Psoas muscle (tissue), 8 donors: ENCODE measurements at regions of chr12 and their contacts with region 1.

Region 1: GRCh38 chr12:43805860-43806736 is at the start of gene TWF1:
- DNase-seq: peak; percentile 91 to 93
- ATAC-seq: peak; percentile 99 to 100 (median 100)
- H3K4me3 ChIP-seq: peak within 1 kb of the TSS; percentile 96
- H3K27ac ChIP-seq: peak within 1 kb of the TSS; percentile 97
- H3K4me1 ChIP-seq: peaks cover 17% of the 10 kb centered on the region
- H3K27me3 ChIP-seq: no peaks in the 10 kb centered on the region
- CTCF ChIP-seq: no peak
- total RNA-seq, gene TWF1: 6.2 to 12.7 (median 9.2) TPM

Region 2: GRCh38 chr12:43766291-43766690 is 39.8 kb before region 1 on chr12:
- intact Hi-C with region 1: loop called in 1 of 2 experiments (anchors 5 kb)
- DNase-seq: no peak
- ATAC-seq: no peak
- H3K4me3 ChIP-seq: no peak overlapping the region
- H3K27ac ChIP-seq: no peak overlapping the region
- H3K4me1 ChIP-seq: no peaks in the 10 kb centered on the region
- H3K27me3 ChIP-seq: no peaks in the 10 kb centered on the region
- CTCF ChIP-seq: no peak

Region 3: GRCh38 chr12:43835656-43836474 is 29.8 kb after region 1 on chr12 and contains the start of gene TMEM117:
- intact Hi-C with region 1: loop called in 1 of 2 experiments (anchors 2 kb)
- DNase-seq: peak; percentile 81 to 89
- ATAC-seq: peak; percentile 95 to 96 (median 95)
- H3K4me3 ChIP-seq: peak within 1 kb of the TSS; percentile 93
- H3K27ac ChIP-seq: peak within 1 kb of the TSS; percentile 98
- H3K4me1 ChIP-seq: peaks cover 16% of the 10 kb centered on the region
- H3K27me3 ChIP-seq: no peaks in the 10 kb centered on the region
- CTCF ChIP-seq: no peak
- total RNA-seq, gene TMEM117: 3.3 to 4.7 (median 4.2) TPM